Dorsolateral prefrontal cortex (tissue), 120 donors: ENCODE measurements at regions of chr3 and their contacts with region 1.

Region 1: GRCh38 chr3:8482960-8483665 is 18.5 kb upstream of the LMCD1 start:
- DNase-seq: peak in 9 of 10 donors; percentile 31 to 80 (median 63)
- H3K4me3 ChIP-seq: no peak overlapping the region
- H3K27ac ChIP-seq: peak overlapping the region in 17 of 59 donors; percentile 5 to 63 (median 31)
- H3K27me3 ChIP-seq: no peaks in the 10 kb centered on the region
- CTCF ChIP-seq: no peak

Region 2: GRCh38 chr3:8359133-8359532 is 124.0 kb before region 1 on chr3:
- intact Hi-C with region 1: no loop called
- DNase-seq: no peak
- H3K4me3 ChIP-seq: no peak overlapping the region
- H3K27ac ChIP-seq: no peak overlapping the region
- H3K27me3 ChIP-seq: peaks cover 0 to 3% (median 0%) of the 10 kb centered on the region in 45 donors
- CTCF ChIP-seq: no peak

Region 3: GRCh38 chr3:8622873-8623691 is 140.0 kb after region 1 on chr3:
- intact Hi-C with region 1: loop called in 1 of 2 experiments (anchors 2 kb)
- DNase-seq: peak; percentile 31 to 81 (median 69)
- H3K4me3 ChIP-seq: peak overlapping the region in 15 of 59 donors; percentile 3 to 46 (median 27)
- H3K27ac ChIP-seq: no peak overlapping the region
- H3K27me3 ChIP-seq: no peaks in the 10 kb centered on the region
- CTCF ChIP-seq: peak; percentile 75 to 98 (median 93)